ENCODE measurements at regions of chr13 and their contacts with region 1.

Region 1: GRCh38 chr13:48942131-48942530 is 33.6 kb upstream of the FNDC3A start:
- DNase-seq: peak; percentile 27
- H3K4me3 ChIP-seq: no peak overlapping the region
- H3K27ac ChIP-seq: no peak overlapping the region
- H3K4me1 ChIP-seq: peaks cover 3% of the 10 kb centered on the region
- H3K27me3 ChIP-seq: no peaks in the 10 kb centered on the region
- CTCF ChIP-seq: no peak

Region 2: GRCh38 chr13:48962281-48962680 is 20.1 kb after region 1 on chr13:
- CTCF ChIA-PET with region 1: no interaction called
- POLR2A ChIA-PET with region 1: no interaction called
- intact Hi-C with region 1: loop called (anchors 2 kb)
- DNase-seq: no peak
- H3K4me3 ChIP-seq: no peak overlapping the region
- H3K27ac ChIP-seq: no peak overlapping the region
- H3K4me1 ChIP-seq: no peaks in the 10 kb centered on the region
- H3K27me3 ChIP-seq: no peaks in the 10 kb centered on the region
- CTCF ChIP-seq: no peak

Measured in A673 (cell line).